Astrocyte of the cerebellum (primary cell): ENCODE measurements at regions of chr1 and their contacts with region 1.

Region 1: GRCh38 chr1:244672946-244673682 is 20.2 kb downstream of the DESI2 start:
- DNase-seq: no peak
- H3K4me3 ChIP-seq: no peak overlapping the region
- CTCF ChIP-seq: no peak

Region 2: DNA sequence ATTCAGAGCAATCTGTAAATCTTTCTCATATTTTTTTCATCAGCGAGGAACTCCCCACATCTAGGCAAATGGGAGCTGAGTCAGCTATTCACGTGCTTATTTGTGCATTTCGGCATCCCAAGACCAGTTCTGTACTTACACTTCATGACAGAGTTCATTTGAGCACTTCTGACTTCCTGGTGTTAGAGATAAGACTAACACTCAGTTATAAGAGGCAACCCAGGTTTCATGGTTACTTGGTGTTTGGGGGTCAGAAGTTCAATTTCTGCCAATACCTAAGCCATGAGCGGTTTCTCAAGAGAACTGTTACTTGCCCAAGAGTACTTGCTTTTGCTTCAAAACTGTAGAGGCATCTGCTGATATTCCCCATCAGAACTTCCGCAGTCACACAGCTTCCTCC is 44.3 kb before region 1 on chr1:
- in situ Hi-C with region 1: no loop called
- DNase-seq: no peak
- H3K4me3 ChIP-seq: no peak overlapping the region
- CTCF ChIP-seq: no peak

Region 3: GRCh38 chr1:244730153-244730933 is 57.2 kb after region 1 on chr1:
- in situ Hi-C with region 1: no loop called
- DNase-seq: no peak
- H3K4me3 ChIP-seq: peak overlapping the region; percentile 34
- CTCF ChIP-seq: no peak

Region 4: DNA sequence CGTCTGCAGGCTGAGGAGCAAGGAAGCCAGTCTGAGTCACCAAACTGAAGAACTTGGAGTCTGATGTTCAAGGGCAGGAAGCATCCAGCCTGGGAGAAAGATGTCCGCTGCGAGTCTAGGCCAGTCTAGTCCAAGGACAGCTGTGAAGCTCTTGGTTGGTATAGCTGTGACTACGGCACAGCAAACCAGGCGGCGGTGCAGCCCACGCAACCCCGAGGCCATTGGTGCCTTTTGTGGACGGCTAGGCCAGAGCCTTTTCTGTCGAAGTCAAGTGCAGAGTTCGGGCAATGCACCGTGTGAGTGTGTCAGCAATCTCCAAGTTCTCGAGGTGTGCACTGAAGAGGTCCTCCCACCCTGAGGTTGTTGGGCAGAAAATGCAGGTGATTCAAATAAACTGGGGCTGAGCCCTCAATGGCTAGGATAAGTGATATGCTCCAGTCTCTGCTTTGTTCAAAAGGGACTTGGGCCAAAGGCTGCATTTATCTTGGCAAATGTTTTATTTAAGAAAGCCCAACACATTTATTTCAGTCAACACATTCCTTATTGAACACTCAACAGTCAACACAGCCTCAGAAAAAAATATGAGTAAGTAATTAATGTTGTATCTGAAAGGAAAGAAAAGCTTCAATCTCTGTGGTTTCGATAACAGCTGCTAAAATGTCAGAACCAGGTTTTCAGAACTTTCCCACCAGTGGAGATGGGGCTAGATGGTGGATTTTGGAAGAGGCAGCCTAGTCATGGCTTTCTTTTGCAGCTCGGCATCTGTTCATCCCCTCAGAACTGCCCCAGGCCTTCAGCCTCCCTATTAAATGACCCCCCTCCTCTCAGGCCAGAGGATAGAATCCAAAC is 84.2 kb after region 1 on chr1:
- in situ Hi-C with region 1: loop called (anchors 5 kb)
- DNase-seq: peak; percentile 59
- H3K4me3 ChIP-seq: no peak overlapping the region
- CTCF ChIP-seq: no peak